Esophagus muscularis mucosa (tissue), 4 donors: ENCODE measurements at regions of chr10 and their contacts with region 1.

Region 1: DNA sequence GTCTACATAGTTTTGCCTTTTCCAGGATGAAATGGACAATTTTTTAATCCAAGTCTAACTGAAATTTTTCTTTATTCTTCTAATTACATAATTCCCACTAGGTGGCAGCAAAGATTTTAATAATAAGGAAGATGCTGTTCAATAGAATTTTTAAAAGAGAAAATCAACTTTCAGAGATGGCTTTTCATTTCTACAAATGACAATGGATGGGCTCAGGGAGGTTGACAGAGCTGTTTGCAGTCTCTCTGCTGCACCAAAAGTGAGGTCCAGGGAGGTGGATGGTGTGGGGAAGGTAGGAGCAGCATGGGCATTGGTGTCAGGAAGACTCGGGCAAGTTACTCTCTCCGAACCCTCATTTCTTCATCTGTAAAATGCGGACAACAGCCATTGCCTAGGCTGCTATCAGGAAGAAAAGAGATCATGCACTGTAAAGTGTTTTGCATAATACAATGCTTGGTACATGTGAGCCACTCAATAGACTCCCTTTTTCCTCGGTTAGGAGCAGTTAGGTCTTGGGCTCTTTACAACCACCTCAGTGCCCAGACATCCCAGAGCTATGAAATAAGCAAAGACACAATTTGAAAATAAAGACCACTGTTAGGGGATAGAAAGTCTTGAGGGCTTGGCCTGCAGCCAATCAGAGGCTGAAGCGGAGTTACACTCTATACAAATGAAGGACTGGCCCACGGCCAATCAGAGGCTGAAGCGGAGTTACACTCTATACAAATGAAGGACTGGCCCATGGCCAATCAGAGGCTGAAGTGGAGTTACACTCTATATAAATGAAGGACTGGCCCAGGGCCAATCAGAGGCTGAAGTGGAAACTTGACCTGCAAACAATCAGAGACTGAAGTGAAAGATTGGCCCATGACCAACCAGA is 107.1 kb downstream of the ABLIM1 start:
- DNase-seq: no peak
- H3K4me3 ChIP-seq: peak overlapping the region; percentile 28 to 52 (median 38)
- H3K27ac ChIP-seq: peak overlapping the region; percentile 42 to 64 (median 55)
- H3K4me1 ChIP-seq: peaks cover 23 to 60% (median 24%) of the 10 kb centered on the region in 4 donors
- H3K27me3 ChIP-seq: no peaks in the 10 kb centered on the region
- CTCF ChIP-seq: peak; percentile 46 to 57 (median 55)
- EP300 ChIP-seq: no peak
- POLR2A ChIP-seq: no peak

Region 2: DNA sequence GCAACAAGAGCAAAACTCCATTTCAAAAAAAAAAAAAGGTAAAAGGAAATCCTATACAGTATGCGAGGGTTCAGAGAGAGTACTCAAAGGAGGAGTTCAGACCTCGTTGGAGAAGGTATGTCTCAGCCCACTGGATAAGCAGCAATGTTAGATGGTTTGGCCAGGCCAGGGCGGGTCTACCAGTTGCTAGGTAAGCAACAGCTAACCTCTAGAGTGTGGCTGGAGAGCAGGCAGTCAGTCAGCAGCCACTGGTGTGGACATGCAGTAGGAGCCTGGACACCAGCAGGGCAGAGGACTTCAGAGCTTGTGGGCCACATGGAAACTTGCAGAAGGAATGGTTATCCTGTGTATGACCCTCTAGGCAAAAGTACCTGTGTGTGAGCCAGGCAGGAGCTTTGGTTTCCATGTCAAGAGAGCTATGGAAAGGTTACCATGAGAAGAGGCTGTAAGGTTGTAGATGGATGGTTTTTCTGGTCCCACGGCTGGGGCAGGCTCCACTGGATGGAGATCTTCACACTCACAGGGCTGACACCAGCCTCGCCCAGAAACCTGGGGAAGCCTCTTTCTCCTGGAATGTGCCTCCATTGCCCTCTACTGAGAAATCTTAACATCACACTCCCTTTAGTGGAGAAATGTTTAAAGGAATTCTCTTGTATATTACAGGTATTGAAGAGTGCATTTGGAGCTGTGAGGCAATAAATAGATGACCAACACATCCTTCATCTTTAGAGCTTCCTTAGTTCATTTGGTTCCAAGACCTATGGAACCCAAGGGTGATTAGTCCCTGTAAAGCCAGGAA is 440.6 kb before region 1 on chr10:
- intact Hi-C with region 1: no loop called
- DNase-seq: no peak
- H3K4me3 ChIP-seq: no peak overlapping the region
- H3K27ac ChIP-seq: no peak overlapping the region
- H3K4me1 ChIP-seq: no peaks in the 10 kb centered on the region
- H3K27me3 ChIP-seq: no peaks in the 10 kb centered on the region
- CTCF ChIP-seq: no peak
- EP300 ChIP-seq: no peak
- POLR2A ChIP-seq: no peak

Region 3: GRCh38 chr10:114470956-114471905 is 79.8 kb before region 1 on chr10:
- intact Hi-C with region 1: loop called (anchors 1 kb)
- DNase-seq: no peak
- H3K4me3 ChIP-seq: no peak overlapping the region
- H3K27ac ChIP-seq: peak overlapping the region in 2 of 4 donors; percentile 29 to 31
- H3K4me1 ChIP-seq: peaks cover 16 to 27% (median 21%) of the 10 kb centered on the region in 4 donors
- H3K27me3 ChIP-seq: no peaks in the 10 kb centered on the region
- CTCF ChIP-seq: peak; percentile 92
- EP300 ChIP-seq: no peak
- POLR2A ChIP-seq: no peak

Region 4: DNA sequence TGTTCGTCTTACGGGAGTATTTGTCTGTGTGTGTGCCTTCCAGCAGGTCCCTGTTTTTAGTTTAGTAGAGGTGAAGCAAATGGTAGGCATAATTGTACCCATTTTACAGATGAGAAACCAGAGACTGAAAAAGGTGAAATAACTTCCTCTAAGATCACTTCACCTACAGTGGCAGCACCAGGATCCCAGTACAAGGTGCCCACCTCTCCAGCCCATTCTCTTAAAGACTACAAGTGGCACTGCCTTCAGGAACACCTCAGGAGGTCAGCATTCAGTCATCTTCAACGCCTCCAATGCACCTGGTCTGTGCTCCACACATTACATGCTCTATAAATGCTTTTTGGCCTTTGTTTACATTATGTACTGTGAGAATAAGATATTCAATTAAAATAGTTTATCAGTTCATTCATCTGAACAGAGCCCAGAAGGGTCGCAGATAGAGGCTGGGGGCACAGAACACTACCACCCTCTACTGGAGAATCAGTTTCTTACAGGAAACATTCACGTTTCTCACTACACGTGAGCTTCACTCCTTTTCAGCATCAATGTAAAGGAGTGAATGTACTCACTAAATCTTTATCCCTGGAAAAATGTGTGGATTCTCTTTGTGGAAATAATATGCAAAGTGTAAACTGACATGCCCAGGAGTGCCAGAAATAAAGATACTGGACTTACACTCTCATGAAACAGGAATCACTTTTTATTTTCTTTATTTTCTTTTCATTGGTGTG is 152.5 kb after region 1 on chr10:
- intact Hi-C with region 1: loop called (anchors 5 kb)
- DNase-seq: no peak
- H3K4me3 ChIP-seq: no peak overlapping the region
- H3K27ac ChIP-seq: no peak overlapping the region
- H3K4me1 ChIP-seq: peaks cover 1 to 8% (median 3%) of the 10 kb centered on the region in 4 donors
- H3K27me3 ChIP-seq: peaks cover 0 to 9% (median 0%) of the 10 kb centered on the region in 4 donors
- CTCF ChIP-seq: peak; percentile 52 to 65 (median 60)
- EP300 ChIP-seq: no peak
- POLR2A ChIP-seq: no peak

Region 5: GRCh38 chr10:114779803-114780609 is 229.0 kb after region 1 on chr10:
- intact Hi-C with region 1: loop called (anchors 5 kb)
- DNase-seq: no peak
- H3K4me3 ChIP-seq: no peak overlapping the region
- H3K27ac ChIP-seq: peak overlapping the region in 3 of 4 donors; percentile 20 to 39 (median 25)
- H3K4me1 ChIP-seq: peaks cover 15 to 25% (median 19%) of the 10 kb centered on the region in 4 donors
- H3K27me3 ChIP-seq: no peaks in the 10 kb centered on the region
- CTCF ChIP-seq: no peak
- EP300 ChIP-seq: no peak
- POLR2A ChIP-seq: no peak

Region 6: DNA sequence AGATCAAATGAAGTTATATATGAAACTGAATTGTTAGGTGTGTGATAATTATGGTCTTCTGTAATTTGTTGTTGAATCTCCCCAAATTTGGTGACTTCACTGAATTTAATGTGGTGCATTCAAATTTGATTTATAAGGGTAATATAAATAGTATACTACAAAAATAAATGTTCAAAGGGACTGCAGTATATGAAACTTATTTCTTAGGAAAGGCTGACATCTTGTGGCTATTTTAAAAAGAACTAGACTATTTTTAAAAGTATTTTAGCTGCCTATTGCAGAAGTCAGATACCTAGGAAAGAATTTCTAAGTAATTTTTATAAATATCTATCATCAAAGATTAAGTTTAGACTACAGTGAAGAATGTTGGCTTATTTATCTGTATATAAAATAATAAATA is 578.8 kb after region 1 on chr10:
- intact Hi-C with region 1: loop called (anchors 5 kb)
- DNase-seq: no peak
- H3K4me3 ChIP-seq: no peak overlapping the region
- H3K27ac ChIP-seq: no peak overlapping the region
- H3K4me1 ChIP-seq: no peaks in the 10 kb centered on the region
- H3K27me3 ChIP-seq: no peaks in the 10 kb centered on the region
- CTCF ChIP-seq: peak; percentile 35 to 37 (median 37)
- EP300 ChIP-seq: no peak
- POLR2A ChIP-seq: no peak